ENCODE measurements at regions of chr19 and their contacts with region 1.

Region 1: GRCh38 chr19:12974301-12975220 is 5.2 kb downstream of the DAND5 start:
- DNase-seq: no peak
- H3K4me3 Mint-ChIP-seq: no peak overlapping the region
- H3K27ac Mint-ChIP-seq: no peak overlapping the region
- H3K4me1 Mint-ChIP-seq: peaks cover 9% of the 10 kb centered on the region
- H3K27me3 Mint-ChIP-seq: peaks cover 8% of the 10 kb centered on the region

Region 2: GRCh38 chr19:12815088-12815487 is 159.5 kb before region 1 on chr19:
- CTCF ChIA-PET with region 1: no interaction called
- POLR2A ChIA-PET with region 1: no interaction called
- intact Hi-C with region 1: no loop called
- DNase-seq: no peak
- H3K4me3 Mint-ChIP-seq: no peak overlapping the region
- H3K27ac Mint-ChIP-seq: no peak overlapping the region
- H3K4me1 Mint-ChIP-seq: no peaks in the 10 kb centered on the region
- H3K27me3 Mint-ChIP-seq: no peaks in the 10 kb centered on the region

Region 3: DNA sequence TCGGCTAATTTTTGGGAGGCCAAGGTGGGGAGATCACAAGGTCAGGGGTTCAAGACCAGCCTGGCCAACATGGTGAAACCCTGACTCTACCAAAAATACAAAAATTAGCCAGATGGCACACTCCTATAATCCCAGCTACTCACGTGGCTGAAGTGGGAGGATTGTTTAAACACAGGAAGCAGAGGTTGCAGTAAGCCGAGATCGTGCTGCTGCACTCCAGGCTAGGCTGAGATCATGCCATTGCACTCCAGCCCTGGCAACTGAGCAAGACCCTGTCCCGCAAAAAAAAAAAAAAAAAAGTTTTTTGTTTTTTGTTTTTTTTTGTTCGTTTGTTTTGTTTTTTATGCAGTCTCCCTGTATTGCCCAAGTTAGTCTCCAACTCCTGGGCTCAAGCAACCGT is 115.0 kb before region 1 on chr19:
- CTCF ChIA-PET with region 1: no interaction called
- POLR2A ChIA-PET with region 1: no interaction called
- intact Hi-C with region 1: no loop called
- DNase-seq: no peak
- H3K4me3 Mint-ChIP-seq: no peak overlapping the region
- H3K27ac Mint-ChIP-seq: no peak overlapping the region
- H3K4me1 Mint-ChIP-seq: no peaks in the 10 kb centered on the region
- H3K27me3 Mint-ChIP-seq: peaks cover 2% of the 10 kb centered on the region

Region 4: GRCh38 chr19:12997967-12998940 is 23.7 kb after region 1 on chr19:
- CTCF ChIA-PET with region 1: no interaction called
- POLR2A ChIA-PET with region 1: no interaction called
- intact Hi-C with region 1: no loop called
- DNase-seq: no peak
- H3K4me3 Mint-ChIP-seq: no peak overlapping the region
- H3K27ac Mint-ChIP-seq: no peak overlapping the region
- H3K4me1 Mint-ChIP-seq: peaks cover 6% of the 10 kb centered on the region
- H3K27me3 Mint-ChIP-seq: peaks cover 11% of the 10 kb centered on the region

Region 5: GRCh38 chr19:13033819-13034611 is 59.5 kb after region 1 on chr19:
- CTCF ChIA-PET with region 1: interaction called, 40 read pairs
- POLR2A ChIA-PET with region 1: no interaction called
- intact Hi-C with region 1: no loop called
- DNase-seq: peak; percentile 60
- H3K4me3 Mint-ChIP-seq: no peak overlapping the region
- H3K27ac Mint-ChIP-seq: no peak overlapping the region
- H3K4me1 Mint-ChIP-seq: peaks cover 5% of the 10 kb centered on the region
- H3K27me3 Mint-ChIP-seq: no peaks in the 10 kb centered on the region

Region 6: DNA sequence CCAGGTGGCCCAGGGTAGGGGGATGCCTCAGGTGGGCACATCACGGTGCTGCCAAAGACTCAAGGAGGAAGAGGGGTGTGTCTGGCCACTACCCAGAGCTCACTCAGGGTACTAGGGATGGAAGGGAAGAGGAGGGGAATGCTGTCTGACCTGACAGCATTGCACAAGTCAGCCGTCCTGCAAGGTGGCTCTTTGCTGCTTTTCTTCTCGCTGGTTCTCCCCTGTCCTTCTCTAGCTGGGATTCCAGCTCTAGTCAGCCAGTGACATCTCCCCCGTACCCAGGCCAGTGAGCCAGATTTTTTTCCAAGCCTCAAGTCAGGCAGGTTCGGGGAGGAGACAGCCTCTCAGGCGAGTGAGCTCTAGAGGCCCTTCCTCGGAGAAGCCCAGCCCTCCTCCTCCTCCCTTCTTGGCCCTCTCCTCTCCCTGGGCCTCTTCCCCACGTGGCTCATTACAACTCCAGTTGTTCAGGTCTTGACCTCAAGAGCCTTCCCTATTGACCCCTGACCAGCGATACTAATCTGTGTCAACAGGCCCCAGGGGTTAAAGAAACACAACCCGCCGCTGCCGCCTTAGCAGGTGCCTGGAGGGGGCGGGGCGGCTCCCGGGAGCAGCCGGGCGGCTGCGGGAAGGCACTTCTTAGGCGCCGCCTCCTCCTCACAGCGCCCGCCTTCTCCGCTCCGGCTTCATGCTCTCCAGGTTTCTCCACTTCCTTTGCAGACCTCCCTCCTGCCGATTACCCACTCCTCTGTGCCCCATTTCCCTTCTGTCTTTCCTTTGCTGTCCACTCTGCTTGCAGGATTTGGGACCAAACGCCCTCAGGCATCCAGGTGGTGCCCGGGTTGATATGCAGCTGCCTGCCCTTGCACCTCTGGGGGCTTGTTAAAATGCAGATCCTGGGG is 77.0 kb after region 1 on chr19:
- CTCF ChIA-PET with region 1: interaction called, 268 read pairs
- POLR2A ChIA-PET with region 1: no interaction called
- intact Hi-C with region 1: no loop called
- DNase-seq: peak; percentile 45
- H3K4me3 Mint-ChIP-seq: peak overlapping the region; percentile 28
- H3K27ac Mint-ChIP-seq: no peak overlapping the region
- H3K4me1 Mint-ChIP-seq: peaks cover 3% of the 10 kb centered on the region
- H3K27me3 Mint-ChIP-seq: peaks cover 7% of the 10 kb centered on the region

Region 7: GRCh38 chr19:13262450-13262849 is 287.9 kb after region 1 on chr19:
- CTCF ChIA-PET with region 1: interaction called, 9 read pairs
- POLR2A ChIA-PET with region 1: no interaction called
- intact Hi-C with region 1: loop called (anchors 10 kb)
- DNase-seq: no peak
- H3K4me3 Mint-ChIP-seq: no peak overlapping the region
- H3K27ac Mint-ChIP-seq: no peak overlapping the region
- H3K4me1 Mint-ChIP-seq: peaks cover 14% of the 10 kb centered on the region
- H3K27me3 Mint-ChIP-seq: peaks cover 13% of the 10 kb centered on the region

Measured in activated CD4-positive, alpha-beta memory T cell treated with anti-CD3 and anti-CD28 coated beads for 36 hours (primary cell).